HEK293 (cell line): ENCODE measurements at regions of chr4 and their contacts with region 1.

Region 1: DNA sequence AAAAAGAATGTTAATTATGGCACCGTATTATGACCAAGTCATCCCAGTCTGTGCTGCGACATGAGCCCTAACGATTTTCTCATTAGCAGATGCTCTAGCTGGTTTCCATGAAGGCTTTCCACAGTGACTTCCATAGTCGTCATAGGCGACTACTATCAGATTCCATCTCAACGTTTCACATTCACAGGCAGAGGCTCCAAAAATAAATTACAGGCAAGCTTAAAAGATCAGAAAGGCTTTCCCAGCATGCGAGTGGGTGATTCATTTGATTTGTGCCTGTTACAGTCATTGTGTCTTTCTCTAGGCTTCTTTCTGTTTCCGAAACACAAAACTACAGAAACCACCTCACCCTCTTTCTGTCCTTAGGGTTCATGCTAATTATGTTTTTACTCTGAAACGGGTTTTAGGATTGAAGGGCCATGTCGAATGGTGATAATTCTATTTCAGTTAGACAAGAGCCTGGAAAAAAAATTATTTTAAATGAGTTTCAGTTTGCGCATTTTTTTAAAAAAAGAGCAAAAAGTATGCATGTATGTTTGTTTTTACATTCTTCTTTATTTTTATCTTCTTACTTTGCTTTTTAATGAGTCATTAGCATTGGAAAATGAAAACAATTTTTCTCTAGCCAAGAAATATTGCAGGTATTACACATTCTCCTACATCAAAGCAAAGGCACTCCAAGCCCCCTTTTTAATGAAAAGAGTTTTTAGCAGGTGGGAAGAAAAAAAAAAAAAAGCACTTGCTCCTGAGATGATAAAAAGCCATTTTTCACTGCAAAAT is 43.4 kb downstream of the PALLD start:
- H3K4me3 ChIP-seq: no peak overlapping the region
- H3K27ac ChIP-seq: no peak overlapping the region
- H3K4me1 ChIP-seq: peaks cover 17% of the 10 kb centered on the region
- CTCF ChIP-seq: no peak

Region 2: DNA sequence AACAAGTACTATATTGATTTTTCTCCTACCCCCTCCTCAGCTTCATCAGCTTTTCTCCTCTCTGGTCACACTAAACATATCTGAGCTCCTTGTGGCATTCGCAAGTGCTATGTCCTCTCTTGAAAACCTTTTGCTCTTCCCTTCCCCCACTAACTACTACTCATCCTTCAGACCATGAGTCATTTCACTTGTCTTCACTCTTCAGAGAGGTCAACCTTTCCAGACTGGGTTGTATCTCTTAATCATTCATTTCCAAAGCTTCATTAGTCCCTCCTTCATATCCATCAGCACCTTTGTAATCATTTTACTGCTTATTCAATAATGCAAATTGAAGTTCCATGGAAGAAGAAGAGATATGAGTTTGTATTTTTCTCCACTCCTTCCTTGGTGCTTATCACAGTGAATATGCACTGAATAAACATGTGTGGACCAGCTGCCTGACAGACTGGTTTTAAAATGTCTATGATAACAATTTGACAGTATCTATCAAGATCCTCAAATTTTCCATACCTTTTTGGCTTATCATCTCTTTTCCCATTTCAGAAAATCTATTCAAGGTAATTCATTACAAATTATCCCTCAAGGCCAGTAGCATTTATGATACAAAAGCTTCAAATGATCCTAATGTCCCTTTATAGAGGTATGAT is 88.4 kb before region 1 on chr4:
- CTCF ChIA-PET with region 1: no interaction called
- POLR2A ChIA-PET with region 1: no interaction called
- H3K4me3 ChIP-seq: no peak overlapping the region
- H3K27ac ChIP-seq: no peak overlapping the region; the same call in 1 of the 2 replicates
- H3K4me1 ChIP-seq: peaks cover 12% of the 10 kb centered on the region; the same call in 1 of the 2 replicates
- CTCF ChIP-seq: no peak

Region 3: DNA sequence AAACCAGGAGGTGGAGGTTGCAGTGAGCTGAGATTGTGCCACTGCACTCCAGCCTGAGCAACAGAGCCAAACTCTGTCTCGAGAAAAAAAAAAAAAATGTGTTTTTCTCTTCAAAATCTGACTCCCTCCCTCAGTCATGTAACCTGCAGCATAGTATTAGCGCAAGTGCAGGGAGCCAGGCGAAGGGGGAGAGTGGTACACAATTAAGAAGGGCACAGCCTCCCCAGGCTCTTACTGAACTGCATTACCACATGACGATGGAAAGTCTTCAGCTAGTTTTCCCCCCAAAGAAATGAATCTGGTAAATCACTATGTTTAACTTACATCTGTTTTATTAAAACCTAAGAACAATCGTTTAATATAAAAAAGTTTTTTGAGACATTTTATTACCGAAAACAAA is 11.0 kb before region 1 on chr4:
- CTCF ChIA-PET with region 1: interaction called, 10 read pairs
- POLR2A ChIA-PET with region 1: no interaction called
- H3K4me3 ChIP-seq: no peak overlapping the region
- H3K27ac ChIP-seq: no peak overlapping the region
- H3K4me1 ChIP-seq: no peaks in the 10 kb centered on the region
- CTCF ChIP-seq: no peak

Region 4: DNA sequence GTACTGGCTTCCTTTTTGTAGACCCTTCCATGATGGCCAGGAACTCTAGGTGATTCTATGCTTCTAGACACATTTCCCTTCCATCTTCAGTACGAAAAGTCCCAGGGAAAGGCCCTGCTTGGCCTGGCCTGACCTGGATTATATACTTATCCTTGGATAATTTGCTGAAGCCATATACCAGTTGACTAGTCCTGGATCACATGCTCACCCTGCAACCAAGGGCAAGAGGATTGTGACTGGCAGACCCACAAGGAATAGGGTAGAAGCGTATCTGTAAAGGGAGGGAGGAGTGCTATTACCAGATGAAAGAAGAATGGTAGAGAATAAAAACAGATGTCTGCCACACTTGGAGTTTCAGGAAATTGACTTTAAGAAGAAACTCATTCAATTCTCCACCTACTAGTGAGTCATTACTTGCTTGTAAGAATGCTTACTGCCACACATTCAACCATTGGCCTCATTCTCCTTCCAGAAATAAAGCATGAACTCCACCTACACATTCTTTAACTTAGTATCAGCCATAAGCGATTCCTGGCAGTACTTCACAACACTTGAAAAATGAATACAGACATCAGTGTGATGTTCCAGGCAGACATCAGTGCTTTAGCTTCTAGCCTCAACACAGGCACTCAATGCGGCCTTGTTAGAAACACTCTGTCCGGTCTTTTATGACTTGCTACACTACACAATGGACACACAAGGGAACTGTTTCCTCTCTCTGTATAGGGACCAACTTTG is 327.9 kb after region 1 on chr4:
- CTCF ChIA-PET with region 1: no interaction called
- POLR2A ChIA-PET with region 1: no interaction called
- H3K4me3 ChIP-seq: no peak overlapping the region
- H3K27ac ChIP-seq: no peak overlapping the region
- H3K4me1 ChIP-seq: no peaks in the 10 kb centered on the region
- CTCF ChIP-seq: no peak